ENCODE measurements at regions of chr1 and their contacts with region 1.

Region 1: GRCh38 chr1:181088079-181089016 is at the start of gene IER5:
- DNase-seq: peak; percentile 86 to 97 (median 92)
- ATAC-seq: peak; percentile 82
- H3K4me3 ChIP-seq: peak within 1 kb of the TSS; percentile 83
- H3K4me3 Mint-ChIP-seq: peak within 1 kb of the TSS; percentile 89 to 100 (median 99)
- H3K27ac ChIP-seq: peak within 1 kb of the TSS; percentile 98
- H3K27ac Mint-ChIP-seq: peak within 1 kb of the TSS; percentile 92 to 98 (median 97)
- H3K4me1 ChIP-seq: peaks cover 12 to 23% of the 10 kb centered on the region in 2 donors
- H3K4me1 Mint-ChIP-seq: peaks cover 25 to 56% (median 46%) of the 10 kb centered on the region in 7 donors
- H3K27me3 ChIP-seq: no peaks in the 10 kb centered on the region
- H3K27me3 Mint-ChIP-seq: peaks cover 0 to 9% (median 0%) of the 10 kb centered on the region in 5 donors
- total RNA-seq, gene IER5: 12.7 to 86.9 (median 46.0) TPM

Region 2: DNA sequence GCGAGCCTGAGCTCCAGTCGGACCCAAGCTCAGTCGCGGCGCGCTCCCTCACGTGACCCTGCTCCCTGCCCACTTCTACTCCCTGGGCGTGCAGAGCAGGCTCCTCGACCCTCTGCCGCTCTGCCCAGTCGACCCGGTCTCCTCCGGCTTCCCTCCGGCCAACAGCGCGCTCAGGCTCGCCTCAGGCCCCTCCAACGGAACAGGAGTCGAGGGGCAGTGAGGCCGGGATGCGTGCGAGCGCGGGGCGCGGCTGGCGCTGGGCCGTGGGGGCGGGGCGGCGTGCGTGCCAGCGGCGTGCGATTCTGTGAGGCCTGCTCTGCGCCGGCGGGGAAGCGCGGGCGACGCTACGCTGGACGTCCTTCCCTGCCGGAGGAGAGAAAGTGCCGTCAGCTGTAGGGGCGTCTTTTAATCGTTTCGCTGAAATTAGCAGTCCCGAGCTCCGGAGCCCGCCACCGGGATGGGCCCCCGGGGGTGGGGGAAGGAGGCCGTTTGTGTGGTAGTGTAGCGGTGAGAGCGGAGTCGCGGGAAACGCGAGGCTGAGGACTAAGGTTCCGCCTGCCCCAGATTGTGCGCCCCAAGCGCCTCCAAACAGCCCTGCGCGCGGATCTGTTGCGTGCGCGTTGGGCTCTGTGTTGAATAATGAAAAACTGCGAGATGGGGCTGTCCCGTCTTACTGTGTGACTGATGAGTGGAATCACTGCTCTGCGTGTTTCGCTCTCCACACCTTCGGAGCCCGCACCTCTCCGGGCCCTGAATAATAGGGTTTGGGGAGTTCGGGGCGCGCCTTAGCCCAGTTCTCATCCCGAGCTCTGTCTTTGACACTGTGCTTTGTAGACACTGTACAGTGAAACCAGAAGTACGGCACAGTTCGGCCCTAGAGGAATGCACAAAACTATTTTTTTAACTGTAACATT is 585.7 kb before region 1 on chr1 and contains the start of gene ACBD6:
- CTCF ChIA-PET with region 1: no interaction called
- POLR2A ChIA-PET with region 1: no interaction called
- intact Hi-C with region 1: loop called (anchors 1 to 5 kb)
- DNase-seq: peak; percentile 80 to 92 (median 89)
- ATAC-seq: peak; percentile 95
- H3K4me3 ChIP-seq: peak within 1 kb of the TSS; percentile 85
- H3K4me3 Mint-ChIP-seq: peak within 1 kb of the TSS; percentile 89 to 100 (median 97)
- H3K27ac ChIP-seq: peak within 1 kb of the TSS; percentile 79
- H3K27ac Mint-ChIP-seq: peak within 1 kb of the TSS; percentile 91 to 99 (median 98)
- H3K4me1 ChIP-seq: peaks cover 10 to 18% of the 10 kb centered on the region in 2 donors
- H3K4me1 Mint-ChIP-seq: peaks cover 17 to 55% (median 38%) of the 10 kb centered on the region in 7 donors
- H3K27me3 ChIP-seq: no peaks in the 10 kb centered on the region
- H3K27me3 Mint-ChIP-seq: peaks cover 0 to 5% (median 0%) of the 10 kb centered on the region in 5 donors
- total RNA-seq, gene ACBD6: 44.2 to 75.7 (median 47.3) TPM

Region 3: DNA sequence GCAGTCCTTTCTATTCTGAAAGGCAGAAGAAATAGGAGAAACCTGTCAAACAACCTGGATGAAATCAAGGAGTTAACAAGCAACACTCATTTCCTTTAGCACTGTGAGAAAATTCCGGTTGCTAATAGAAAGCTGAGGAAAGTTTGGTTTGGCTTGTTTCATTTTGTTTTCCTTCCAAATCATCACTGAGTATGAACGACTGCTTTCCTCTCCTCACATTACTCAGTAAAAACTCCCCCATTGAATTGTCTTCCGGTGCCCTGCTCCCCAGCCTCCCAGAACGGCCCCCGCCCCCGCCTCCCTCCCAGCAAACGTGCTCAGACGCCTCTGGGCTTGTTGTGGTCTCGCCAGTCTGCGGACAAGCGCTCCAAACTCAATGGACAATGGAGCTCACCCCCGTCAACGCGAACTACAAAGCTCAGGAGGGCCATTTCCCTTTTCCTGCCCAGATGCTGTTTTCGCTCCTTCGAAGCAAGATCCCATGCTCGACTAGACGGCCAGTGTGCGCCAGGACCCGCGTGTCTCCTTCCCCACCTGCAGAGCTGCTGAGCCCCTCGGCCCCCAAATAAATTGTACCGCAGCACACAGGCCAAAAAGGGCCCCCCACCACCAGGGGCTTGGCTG is 66.4 kb before region 1 on chr1:
- CTCF ChIA-PET with region 1: interaction called, 3 read pairs
- POLR2A ChIA-PET with region 1: interaction called, 8 read pairs
- intact Hi-C with region 1: loop called (anchors 1 kb)
- DNase-seq: peak; percentile 12 to 67 (median 33)
- ATAC-seq: peak; percentile 21
- H3K4me3 ChIP-seq: peak overlapping the region; percentile 84
- H3K4me3 Mint-ChIP-seq: peak overlapping the region; percentile 92 to 98 (median 94)
- H3K27ac ChIP-seq: peak overlapping the region; percentile 84
- H3K27ac Mint-ChIP-seq: peak overlapping the region; percentile 93 to 100 (median 97)
- H3K4me1 ChIP-seq: peaks cover 21 to 22% of the 10 kb centered on the region in 2 donors
- H3K4me1 Mint-ChIP-seq: peaks cover 17 to 59% (median 48%) of the 10 kb centered on the region in 7 donors
- H3K27me3 ChIP-seq: no peaks in the 10 kb centered on the region
- H3K27me3 Mint-ChIP-seq: peaks cover 0 to 25% (median 0%) of the 10 kb centered on the region in 5 donors

Region 4: DNA sequence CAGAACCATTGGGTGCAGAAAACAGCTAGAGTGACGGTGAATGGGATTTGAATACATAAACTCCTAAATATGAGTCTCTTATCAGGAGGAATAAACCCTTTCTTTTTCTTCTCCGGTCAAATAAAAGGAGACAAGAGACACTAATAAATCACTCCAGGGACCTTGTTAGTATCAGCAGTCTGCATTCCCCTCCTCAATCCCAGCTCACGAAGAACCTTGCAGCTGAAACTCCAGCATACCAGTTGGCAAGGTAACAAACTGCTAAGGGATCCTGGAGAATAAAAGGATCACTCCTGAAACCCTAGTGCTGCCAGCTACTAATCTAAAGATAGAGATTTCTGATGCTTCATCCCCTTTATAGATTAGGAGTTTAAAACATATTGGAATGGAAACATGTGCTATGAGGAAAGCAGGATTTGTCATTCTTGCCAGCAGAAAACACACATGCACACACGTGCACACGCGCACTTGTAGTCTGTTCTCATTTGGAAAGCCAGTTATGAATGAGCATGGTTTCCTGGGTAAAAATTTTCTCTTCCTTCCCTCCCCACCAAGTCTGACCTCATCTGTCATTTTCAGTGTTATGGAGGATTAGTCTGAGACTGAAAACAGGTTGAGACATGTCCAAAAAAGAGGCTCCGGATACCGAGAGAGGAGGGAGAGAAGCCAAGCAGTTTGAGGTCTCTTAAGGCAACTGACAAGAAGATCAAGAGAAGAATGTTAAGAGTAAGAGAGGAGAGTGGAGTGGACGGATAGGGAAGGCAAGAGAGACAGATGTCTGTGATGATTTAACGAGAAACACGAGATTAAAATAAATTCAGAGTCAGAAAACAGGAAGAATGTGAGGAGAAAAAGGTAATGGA is 11.0 kb after region 1 on chr1:
- CTCF ChIA-PET with region 1: interaction called, 3 read pairs
- POLR2A ChIA-PET with region 1: interaction called, 264 read pairs
- intact Hi-C with region 1: loop called (anchors 1 kb)
- DNase-seq: no peak
- ATAC-seq: peak; percentile 4
- H3K4me3 ChIP-seq: no peak overlapping the region
- H3K4me3 Mint-ChIP-seq: peak overlapping the region in 7 of 10 donors; percentile 14 to 67 (median 23)
- H3K27ac ChIP-seq: no peak overlapping the region
- H3K27ac Mint-ChIP-seq: peak overlapping the region; percentile 6 to 93 (median 23)
- H3K4me1 ChIP-seq: peaks cover 17 to 21% of the 10 kb centered on the region in 2 donors
- H3K4me1 Mint-ChIP-seq: peaks cover 28 to 82% (median 58%) of the 10 kb centered on the region in 7 donors
- H3K27me3 ChIP-seq: no peaks in the 10 kb centered on the region
- H3K27me3 Mint-ChIP-seq: peaks cover 0 to 1% (median 0%) of the 10 kb centered on the region in 5 donors

Region 5: GRCh38 chr1:181152892-181153633 is 64.7 kb after region 1 on chr1:
- CTCF ChIA-PET with region 1: interaction called, 25 read pairs
- POLR2A ChIA-PET with region 1: interaction called, 176 read pairs
- intact Hi-C with region 1: loop called in 1 of 2 experiments (anchors 1 kb)
- DNase-seq: no peak
- ATAC-seq: peak; percentile 58
- H3K4me3 ChIP-seq: no peak overlapping the region
- H3K4me3 Mint-ChIP-seq: no peak overlapping the region
- H3K27ac ChIP-seq: no peak overlapping the region
- H3K27ac Mint-ChIP-seq: peak overlapping the region in 1 of 9 donors; percentile 44
- H3K4me1 ChIP-seq: peaks cover 36 to 49% of the 10 kb centered on the region in 2 donors
- H3K4me1 Mint-ChIP-seq: peaks cover 37 to 75% (median 63%) of the 10 kb centered on the region in 7 donors
- H3K27me3 ChIP-seq: no peaks in the 10 kb centered on the region
- H3K27me3 Mint-ChIP-seq: peaks cover 0 to 27% (median 0%) of the 10 kb centered on the region in 5 donors

Region 6: GRCh38 chr1:181239086-181239485 is 150.7 kb after region 1 on chr1:
- CTCF ChIA-PET with region 1: no interaction called
- POLR2A ChIA-PET with region 1: no interaction called
- intact Hi-C with region 1: no loop called
- DNase-seq: no peak
- ATAC-seq: no peak
- H3K4me3 ChIP-seq: no peak overlapping the region
- H3K4me3 Mint-ChIP-seq: no peak overlapping the region
- H3K27ac ChIP-seq: no peak overlapping the region
- H3K27ac Mint-ChIP-seq: no peak overlapping the region
- H3K4me1 ChIP-seq: no peaks in the 10 kb centered on the region
- H3K4me1 Mint-ChIP-seq: no peaks in the 10 kb centered on the region
- H3K27me3 ChIP-seq: no peaks in the 10 kb centered on the region
- H3K27me3 Mint-ChIP-seq: peaks cover 0 to 5% (median 0%) of the 10 kb centered on the region in 5 donors

Region 7: GRCh38 chr1:181397845-181398244 is 309.5 kb after region 1 on chr1:
- CTCF ChIA-PET with region 1: no interaction called
- POLR2A ChIA-PET with region 1: interaction called, 5 read pairs
- intact Hi-C with region 1: loop called (anchors 1 to 2 kb)
- DNase-seq: peak in 7 of 9 donors; percentile 24 to 57 (median 45)
- ATAC-seq: peak; percentile 47
- H3K4me3 ChIP-seq: peak overlapping the region; percentile 22
- H3K4me3 Mint-ChIP-seq: peak overlapping the region in 8 of 10 donors; percentile 57 to 82 (median 74)
- H3K27ac ChIP-seq: peak overlapping the region; percentile 62
- H3K27ac Mint-ChIP-seq: peak overlapping the region in 2 of 9 donors; percentile 83 to 94
- H3K4me1 ChIP-seq: peaks cover 41 to 77% of the 10 kb centered on the region in 2 donors
- H3K4me1 Mint-ChIP-seq: peaks cover 26 to 45% (median 41%) of the 10 kb centered on the region in 7 donors
- H3K27me3 ChIP-seq: no peaks in the 10 kb centered on the region
- H3K27me3 Mint-ChIP-seq: no peaks in the 10 kb centered on the region

Region 8: DNA sequence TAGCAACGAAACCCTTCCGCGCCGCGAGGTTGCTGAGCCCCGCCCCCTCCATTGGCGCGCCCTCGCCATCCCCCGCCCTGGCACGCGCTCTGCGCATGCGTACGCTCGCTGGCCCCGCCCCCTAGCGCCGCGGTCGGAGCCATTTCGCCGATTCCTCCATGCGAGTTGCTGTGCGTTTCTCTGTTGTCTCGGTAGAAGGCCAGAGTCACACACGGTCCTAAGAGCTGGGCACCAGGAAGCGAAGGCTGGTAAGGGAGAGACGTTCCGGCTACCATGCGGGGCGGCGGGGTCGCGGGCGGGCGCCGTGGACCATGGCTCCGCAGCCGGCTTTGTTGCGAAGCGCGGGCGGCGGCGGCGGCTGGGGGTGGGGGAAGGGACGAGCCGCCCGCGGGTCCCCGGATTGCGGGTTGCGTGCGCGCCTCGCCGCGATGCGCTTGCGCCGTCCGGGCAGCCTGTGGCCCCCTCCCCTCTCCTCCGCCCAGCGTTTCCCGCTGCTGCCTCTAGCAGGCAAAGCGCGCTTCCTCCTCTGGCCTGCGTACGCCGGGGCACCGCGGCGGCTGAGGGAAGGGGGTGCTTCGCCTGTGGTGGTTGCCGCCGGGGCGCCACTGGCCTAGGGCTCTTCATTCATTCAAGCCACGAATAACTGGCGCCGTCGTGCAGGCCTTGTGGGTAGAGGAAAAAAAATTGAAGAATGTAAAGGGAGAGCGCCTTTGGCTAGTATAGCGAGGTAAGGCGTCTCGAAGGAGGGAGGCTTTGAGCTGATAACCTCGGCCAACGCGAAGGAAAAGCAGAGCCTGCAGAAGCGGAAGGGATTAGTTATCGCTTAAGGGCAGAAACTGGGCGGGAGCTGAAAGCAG is 1751.1 kb after region 1 on chr1 and contains the start of gene DHX9:
- CTCF ChIA-PET with region 1: no interaction called
- POLR2A ChIA-PET with region 1: no interaction called
- intact Hi-C with region 1: loop called in 1 of 2 experiments (anchors 2 kb)
- DNase-seq: peak; percentile 93 to 100 (median 97)
- ATAC-seq: peak; percentile 89
- H3K4me3 ChIP-seq: peak within 1 kb of the TSS; percentile 99
- H3K4me3 Mint-ChIP-seq: peak within 1 kb of the TSS; percentile 91 to 100 (median 98)
- H3K27ac ChIP-seq: peak within 1 kb of the TSS; percentile 84
- H3K27ac Mint-ChIP-seq: peak within 1 kb of the TSS; percentile 92 to 100 (median 98)
- H3K4me1 ChIP-seq: peaks cover 22 to 33% of the 10 kb centered on the region in 2 donors
- H3K4me1 Mint-ChIP-seq: peaks cover 36 to 61% (median 54%) of the 10 kb centered on the region in 7 donors
- H3K27me3 ChIP-seq: no peaks in the 10 kb centered on the region
- H3K27me3 Mint-ChIP-seq: peaks cover 0 to 9% (median 0%) of the 10 kb centered on the region in 5 donors
- total RNA-seq, gene DHX9: 207 to 299 (median 227) TPM